K562 (cell line): ENCODE measurements at regions of chr18 and their contacts with region 1.

Region 1: DNA sequence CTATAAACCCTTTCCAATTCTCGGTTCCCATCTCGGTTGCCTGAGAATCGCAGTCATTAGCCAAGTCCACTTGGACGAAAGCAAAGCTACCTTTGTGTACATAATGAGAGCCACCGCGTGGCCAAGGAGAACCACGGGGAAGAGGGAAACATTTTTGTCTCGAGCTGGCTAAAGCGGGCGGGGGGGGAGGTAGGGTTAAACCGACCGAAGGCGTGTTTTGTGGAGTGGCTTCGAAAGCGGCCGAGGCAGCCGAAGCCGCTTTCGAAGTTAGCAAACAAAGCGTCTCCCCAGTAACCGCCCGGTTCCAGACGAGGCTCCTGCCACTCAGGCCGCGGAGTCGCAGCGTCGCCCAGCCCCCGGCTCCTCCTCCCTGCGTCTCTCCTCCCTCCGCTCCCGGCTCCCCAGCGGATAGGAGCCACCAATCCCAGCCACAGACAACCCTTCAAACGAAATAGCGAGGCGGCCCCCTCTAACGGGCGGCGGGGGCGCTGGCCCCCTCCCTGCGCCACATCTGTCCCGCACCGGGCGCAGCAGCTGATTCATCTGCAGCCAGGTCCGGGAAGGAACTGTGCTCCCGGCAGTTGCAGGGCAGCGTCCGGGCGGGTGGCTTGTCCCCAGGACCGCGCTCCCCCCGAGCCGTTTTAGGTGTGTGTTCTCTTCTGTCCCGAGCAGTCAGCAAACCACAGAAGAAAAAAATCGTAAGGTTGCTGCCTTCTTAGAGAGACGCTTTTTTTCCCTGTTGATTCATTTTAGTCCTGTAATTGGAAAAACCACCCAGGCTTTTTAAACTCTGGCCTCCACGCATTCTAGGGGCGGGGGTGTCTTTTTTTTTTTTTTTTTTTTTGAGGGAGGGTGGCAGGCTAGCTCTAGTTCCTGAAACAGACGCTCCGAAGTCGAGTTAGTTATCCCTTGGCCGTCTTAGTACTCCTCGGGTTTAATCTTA is 1.8 kb upstream of the TGIF1 start:
- DNase-seq: peak; percentile 85 to 99 (median 89)
- ATAC-seq: peak; percentile 78
- H3K4me3 ChIP-seq: peak overlapping the region; percentile 87
- H3K27ac ChIP-seq: peak overlapping the region; percentile 98
- H3K4me1 ChIP-seq: peaks cover 31 to 51% of the 10 kb centered on the region in 2 experiments
- H3K27me3 ChIP-seq: no peaks in the 10 kb centered on the region
- CTCF ChIP-seq: peak in 2 of 3 experiments; percentile 31 to 49; a peak in 2 of 6 replicates
- EP300 ChIP-seq: peak; percentile 81
- POLR2A ChIP-seq: no peak
- RAD21 ChIP-seq: peak in 1 of 2 experiments; percentile 33; a peak in 3 of 4 replicates

Region 2: GRCh38 chr18:3434685-3435084 is 13.5 kb before region 1 on chr18:
- CTCF ChIA-PET with region 1: no interaction called
- POLR2A ChIA-PET with region 1: interaction called, 11 read pairs
- in situ Hi-C with region 1: no loop called
- intact Hi-C with region 1: no loop called
- DNase-seq: no peak
- ATAC-seq: no peak; the same call in 1 of the 3 replicates
- H3K4me3 ChIP-seq: no peak overlapping the region
- H3K27ac ChIP-seq: no peak overlapping the region
- H3K4me1 ChIP-seq: no peaks in the 10 kb centered on the region; a peak in 1 of 5 replicates
- H3K27me3 ChIP-seq: no peaks in the 10 kb centered on the region
- CTCF ChIP-seq: no peak
- EP300 ChIP-seq: no peak
- POLR2A ChIP-seq: no peak
- RAD21 ChIP-seq: no peak

Region 3: DNA sequence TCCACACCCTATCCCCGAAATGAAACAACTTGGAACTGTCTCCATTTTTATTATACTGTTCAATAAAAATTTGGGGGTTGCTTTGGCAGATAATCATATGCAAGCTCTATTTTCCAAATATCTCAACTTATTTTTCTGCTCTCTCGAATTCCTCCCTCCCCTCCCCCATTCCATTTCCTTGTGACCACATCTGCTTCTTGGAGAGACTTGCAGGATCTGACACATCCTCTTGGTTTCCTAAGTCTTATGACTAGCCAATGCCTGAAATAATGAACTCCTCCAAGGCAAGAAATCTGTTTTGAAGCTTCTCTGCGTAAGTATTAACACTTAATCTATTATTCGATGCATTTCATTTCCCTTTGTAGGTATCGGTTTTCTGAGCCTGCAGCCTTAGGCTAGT is 17.9 kb after region 1 on chr18:
- CTCF ChIA-PET with region 1: no interaction called
- POLR2A ChIA-PET with region 1: interaction called, 25 read pairs
- in situ Hi-C with region 1: no loop called
- intact Hi-C with region 1: no loop called
- DNase-seq: peak in 1 of 4 experiments; percentile 45
- ATAC-seq: peak; percentile 17; the same call in 1 of the 3 replicates
- H3K4me3 ChIP-seq: no peak overlapping the region
- H3K27ac ChIP-seq: no peak overlapping the region
- H3K4me1 ChIP-seq: peaks cover 8 to 19% of the 10 kb centered on the region in 2 experiments; a peak in 4 of 5 replicates
- H3K27me3 ChIP-seq: no peaks in the 10 kb centered on the region
- CTCF ChIP-seq: no peak
- EP300 ChIP-seq: no peak
- POLR2A ChIP-seq: no peak
- RAD21 ChIP-seq: no peak